PC-3 (cell line): ENCODE measurements at regions of chr2 and their contacts with region 1.

Region 1: GRCh38 chr2:168687314-168687713 is 115.1 kb upstream of the NOSTRIN start:
- DNase-seq: peak; percentile 25
- ATAC-seq: peak; percentile 46
- H3K4me3 ChIP-seq: no peak overlapping the region
- H3K27ac ChIP-seq: no peak overlapping the region
- H3K4me1 ChIP-seq: peaks cover 10% of the 10 kb centered on the region; the same call in 1 of the 2 replicates
- H3K27me3 ChIP-seq: no peaks in the 10 kb centered on the region
- CTCF ChIP-seq: peak; percentile 51

Region 2: DNA sequence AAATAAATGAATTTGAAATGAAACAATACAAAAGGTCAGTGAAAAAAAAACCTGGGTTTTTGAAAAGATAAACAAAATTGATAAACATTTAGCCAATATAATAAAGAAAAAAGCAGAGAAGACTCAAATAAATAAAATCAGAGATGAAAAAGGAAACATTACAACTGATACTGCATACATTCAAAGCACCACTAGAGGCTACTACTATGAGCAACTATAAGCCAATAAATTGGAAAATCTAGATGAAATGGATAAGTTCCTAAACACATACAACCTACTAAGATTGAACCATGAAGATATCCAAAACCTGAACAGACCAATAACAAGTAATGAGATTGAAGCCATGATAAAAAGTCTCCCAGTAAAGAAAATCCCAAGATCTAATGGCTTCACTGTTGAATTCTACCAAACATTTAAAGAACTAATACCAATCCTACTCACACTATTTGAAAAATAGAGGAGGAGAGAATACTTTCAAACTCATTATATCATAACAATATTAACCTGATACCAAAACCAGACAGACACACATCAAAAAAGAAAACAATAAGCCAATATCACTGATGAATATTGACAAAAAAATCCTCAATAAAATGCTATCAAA is 312.0 kb before region 1 on chr2:
- CTCF ChIA-PET with region 1: no interaction called
- POLR2A ChIA-PET with region 1: no interaction called
- intact Hi-C with region 1: loop called (anchors 10 kb)
- DNase-seq: peak; percentile 45
- ATAC-seq: no peak
- H3K4me3 ChIP-seq: no peak overlapping the region
- H3K27ac ChIP-seq: no peak overlapping the region
- H3K4me1 ChIP-seq: no peaks in the 10 kb centered on the region
- H3K27me3 ChIP-seq: no peaks in the 10 kb centered on the region
- CTCF ChIP-seq: peak; percentile 72

Region 3: GRCh38 chr2:168601741-168602140 is 85.6 kb before region 1 on chr2:
- CTCF ChIA-PET with region 1: no interaction called
- POLR2A ChIA-PET with region 1: no interaction called
- intact Hi-C with region 1: no loop called
- DNase-seq: no peak
- ATAC-seq: no peak
- H3K4me3 ChIP-seq: no peak overlapping the region
- H3K27ac ChIP-seq: no peak overlapping the region
- H3K4me1 ChIP-seq: no peaks in the 10 kb centered on the region
- H3K27me3 ChIP-seq: no peaks in the 10 kb centered on the region
- CTCF ChIP-seq: no peak